T-cell (primary cell): ENCODE measurements at regions of chr18 and their contacts with region 1.

Region 1: GRCh38 chr18:37235583-37235982 is 330.0 kb downstream of the CELF4 start:
- DNase-seq: no peak
- ATAC-seq: no peak
- H3K4me3 ChIP-seq: no peak overlapping the region
- H3K4me3 Mint-ChIP-seq: no peak overlapping the region
- H3K27ac ChIP-seq: no peak overlapping the region
- H3K27ac Mint-ChIP-seq: no peak overlapping the region
- H3K4me1 ChIP-seq: no peaks in the 10 kb centered on the region
- H3K4me1 Mint-ChIP-seq: no peaks in the 10 kb centered on the region
- H3K27me3 ChIP-seq: peaks cover 0 to 3% of the 10 kb centered on the region in 2 experiments
- H3K27me3 Mint-ChIP-seq: no peaks in the 10 kb centered on the region

Region 2: GRCh38 chr18:37430357-37431076 is 194.9 kb after region 1 on chr18:
- CTCF ChIA-PET with region 1: no interaction called
- POLR2A ChIA-PET with region 1: interaction called in 1 of 2 experiments, 10 read pairs
- DNase-seq: no peak
- ATAC-seq: no peak
- H3K4me3 ChIP-seq: no peak overlapping the region
- H3K4me3 Mint-ChIP-seq: no peak overlapping the region
- H3K27ac ChIP-seq: no peak overlapping the region
- H3K27ac Mint-ChIP-seq: no peak overlapping the region
- H3K4me1 ChIP-seq: no peaks in the 10 kb centered on the region
- H3K4me1 Mint-ChIP-seq: peaks cover 0 to 7% (median 0%) of the 10 kb centered on the region in 3 donors
- H3K27me3 ChIP-seq: peaks cover 0 to 8% of the 10 kb centered on the region in 2 experiments
- H3K27me3 Mint-ChIP-seq: peaks cover 0 to 5% of the 10 kb centered on the region in 2 donors

Region 3: GRCh38 chr18:37812961-37813360 is 577.4 kb after region 1 on chr18:
- CTCF ChIA-PET with region 1: no interaction called
- POLR2A ChIA-PET with region 1: no interaction called
- DNase-seq: no peak
- ATAC-seq: no peak
- H3K4me3 ChIP-seq: no peak overlapping the region
- H3K4me3 Mint-ChIP-seq: no peak overlapping the region
- H3K27ac ChIP-seq: no peak overlapping the region
- H3K27ac Mint-ChIP-seq: no peak overlapping the region
- H3K4me1 ChIP-seq: no peaks in the 10 kb centered on the region
- H3K4me1 Mint-ChIP-seq: no peaks in the 10 kb centered on the region
- H3K27me3 ChIP-seq: no peaks in the 10 kb centered on the region
- H3K27me3 Mint-ChIP-seq: no peaks in the 10 kb centered on the region